CD4-positive, alpha-beta T cell (primary cell): ENCODE measurements at regions of chr17 and their contacts with region 1.

Region 1: DNA sequence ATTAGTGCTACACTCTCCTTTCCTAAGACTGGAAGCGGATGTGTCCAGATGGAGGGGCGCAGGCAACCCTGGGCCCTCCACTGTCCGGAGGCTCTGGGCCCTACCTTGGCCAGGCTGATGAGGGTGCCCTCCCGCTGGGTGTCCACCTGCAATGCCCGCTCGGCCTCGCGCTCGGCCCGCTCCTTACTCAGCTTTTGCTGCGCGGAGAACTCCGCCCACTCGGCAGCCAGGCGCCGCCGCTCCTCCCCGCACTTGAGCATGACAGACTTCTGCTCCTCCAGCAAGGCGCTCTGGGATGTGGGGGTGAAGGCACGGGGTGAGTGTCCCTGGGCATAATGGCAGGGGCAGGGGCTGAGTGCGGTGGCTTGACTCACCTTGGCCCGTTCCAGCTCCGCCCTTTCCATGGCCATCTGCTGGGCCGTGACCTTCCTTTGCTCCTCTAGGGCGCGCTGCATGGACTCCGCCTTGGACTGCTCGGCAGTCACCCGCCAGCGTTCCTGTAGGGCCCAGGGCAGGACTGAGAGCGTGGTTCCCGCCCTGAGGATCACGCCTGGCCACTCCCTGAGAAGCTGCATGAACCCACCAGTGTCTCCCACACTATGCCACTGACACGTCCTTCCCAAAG is 10.1 kb upstream of the MRPL38 start:
- DNase-seq: no peak
- ATAC-seq: no peak
- H3K4me3 ChIP-seq: no peak overlapping the region
- H3K4me3 Mint-ChIP-seq: no peak overlapping the region
- H3K27ac ChIP-seq: no peak overlapping the region
- H3K27ac Mint-ChIP-seq: no peak overlapping the region
- H3K4me1 ChIP-seq: peaks cover 9% of the 10 kb centered on the region
- H3K4me1 Mint-ChIP-seq: peaks cover 5% of the 10 kb centered on the region
- H3K27me3 ChIP-seq: no peaks in the 10 kb centered on the region
- H3K27me3 Mint-ChIP-seq: no peaks in the 10 kb centered on the region
- CTCF ChIP-seq: no peak

Region 2: GRCh38 chr17:75869282-75870141 is 45.2 kb before region 1 on chr17:
- CTCF ChIA-PET with region 1: no interaction called
- POLR2A ChIA-PET with region 1: no interaction called
- intact Hi-C with region 1: no loop called
- DNase-seq: no peak
- ATAC-seq: no peak
- H3K4me3 ChIP-seq: no peak overlapping the region
- H3K4me3 Mint-ChIP-seq: no peak overlapping the region
- H3K27ac ChIP-seq: no peak overlapping the region
- H3K27ac Mint-ChIP-seq: no peak overlapping the region
- H3K4me1 ChIP-seq: peaks cover 28% of the 10 kb centered on the region
- H3K4me1 Mint-ChIP-seq: peaks cover 38% of the 10 kb centered on the region
- H3K27me3 ChIP-seq: no peaks in the 10 kb centered on the region
- H3K27me3 Mint-ChIP-seq: no peaks in the 10 kb centered on the region
- CTCF ChIP-seq: no peak

Region 3: GRCh38 chr17:75885431-75885830 is 29.3 kb before region 1 on chr17:
- CTCF ChIA-PET with region 1: no interaction called
- POLR2A ChIA-PET with region 1: no interaction called
- intact Hi-C with region 1: no loop called
- DNase-seq: no peak
- ATAC-seq: no peak
- H3K4me3 ChIP-seq: no peak overlapping the region
- H3K4me3 Mint-ChIP-seq: no peak overlapping the region
- H3K27ac ChIP-seq: no peak overlapping the region
- H3K27ac Mint-ChIP-seq: no peak overlapping the region
- H3K4me1 ChIP-seq: peaks cover 14% of the 10 kb centered on the region
- H3K4me1 Mint-ChIP-seq: peaks cover 8% of the 10 kb centered on the region
- H3K27me3 ChIP-seq: no peaks in the 10 kb centered on the region
- H3K27me3 Mint-ChIP-seq: no peaks in the 10 kb centered on the region
- CTCF ChIP-seq: no peak

Region 4: GRCh38 chr17:75950821-75951554 is 36.2 kb after region 1 on chr17:
- CTCF ChIA-PET with region 1: no interaction called
- POLR2A ChIA-PET with region 1: no interaction called
- intact Hi-C with region 1: no loop called
- DNase-seq: no peak
- ATAC-seq: no peak
- H3K4me3 ChIP-seq: no peak overlapping the region
- H3K4me3 Mint-ChIP-seq: no peak overlapping the region
- H3K27ac ChIP-seq: no peak overlapping the region
- H3K27ac Mint-ChIP-seq: no peak overlapping the region
- H3K4me1 ChIP-seq: no peaks in the 10 kb centered on the region
- H3K4me1 Mint-ChIP-seq: no peaks in the 10 kb centered on the region
- H3K27me3 ChIP-seq: no peaks in the 10 kb centered on the region
- H3K27me3 Mint-ChIP-seq: no peaks in the 10 kb centered on the region
- CTCF ChIP-seq: no peak

Region 5: DNA sequence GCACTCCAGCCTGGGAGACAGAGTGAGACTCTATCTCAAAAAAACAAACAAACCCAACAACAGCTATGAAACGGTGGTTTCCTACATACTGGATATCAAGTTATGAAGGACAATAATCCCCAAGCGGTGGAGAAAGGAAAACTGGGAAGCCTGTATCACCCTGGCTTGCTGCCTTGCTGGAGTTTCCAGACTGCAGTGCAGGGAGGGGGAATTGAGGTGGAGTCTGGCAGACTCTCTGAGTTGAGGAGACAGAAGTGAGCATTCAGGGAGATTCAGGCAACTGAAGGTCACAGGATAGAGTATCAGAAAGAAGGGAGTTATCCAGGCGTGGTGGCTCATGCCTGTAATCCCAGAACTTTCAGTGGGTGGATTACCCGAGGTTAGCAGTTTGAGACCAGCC is 381.4 kb after region 1 on chr17:
- CTCF ChIA-PET with region 1: no interaction called
- POLR2A ChIA-PET with region 1: no interaction called
- intact Hi-C with region 1: loop called (anchors 5 to 10 kb)
- DNase-seq: no peak
- ATAC-seq: no peak
- H3K4me3 ChIP-seq: no peak overlapping the region
- H3K4me3 Mint-ChIP-seq: no peak overlapping the region
- H3K27ac ChIP-seq: no peak overlapping the region
- H3K27ac Mint-ChIP-seq: no peak overlapping the region
- H3K4me1 ChIP-seq: peaks cover 2% of the 10 kb centered on the region
- H3K4me1 Mint-ChIP-seq: peaks cover 4% of the 10 kb centered on the region
- H3K27me3 ChIP-seq: no peaks in the 10 kb centered on the region
- H3K27me3 Mint-ChIP-seq: no peaks in the 10 kb centered on the region
- CTCF ChIP-seq: no peak